Activated T-helper 1 cell treated with anti-CD3 and anti-CD28 coated beads, Interleukin-12 subunit alpha, Interleukin-12 subunit beta, Interleukin-2, Interleukin-4 antibody, amounts not matched to agents 30 ng/mL and 10 ng/mL and 1 ng/mL, durations not matched to agents 14 hours and 24 hours and 36 hours (primary cell): ENCODE measurements at regions of chr19 and their contacts with region 1.

Region 1: DNA sequence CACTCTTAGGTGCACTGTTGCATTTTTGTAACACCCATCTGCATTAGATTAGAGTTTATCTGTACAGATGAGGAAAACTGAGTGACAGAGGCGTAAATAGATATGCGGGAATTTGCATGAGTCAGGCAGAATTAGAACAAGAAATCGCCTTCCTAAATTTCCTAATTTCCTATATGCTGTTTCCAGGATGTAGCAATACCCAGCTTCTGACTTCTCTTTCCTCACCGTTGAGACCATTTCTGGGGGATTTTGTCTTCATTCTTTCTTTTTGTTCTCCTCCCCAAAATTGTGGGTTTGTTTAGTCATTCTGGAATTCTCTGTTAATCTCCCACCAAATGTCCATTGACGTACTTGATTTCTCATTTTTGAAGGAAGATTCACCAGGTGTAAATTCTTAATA is 10.6 kb upstream of the ZNF792 start:
- DNase-seq: no peak
- H3K4me3 Mint-ChIP-seq: no peak overlapping the region
- H3K27ac Mint-ChIP-seq: no peak overlapping the region
- H3K4me1 Mint-ChIP-seq: peaks cover 13% of the 10 kb centered on the region
- H3K27me3 Mint-ChIP-seq: peaks cover 4% of the 10 kb centered on the region

Region 2: GRCh38 chr19:34639491-34640085 is 335.1 kb before region 1 on chr19:
- intact Hi-C with region 1: loop called (anchors 1 kb)
- DNase-seq: peak; percentile 45
- H3K4me3 Mint-ChIP-seq: no peak overlapping the region
- H3K27ac Mint-ChIP-seq: no peak overlapping the region
- H3K4me1 Mint-ChIP-seq: no peaks in the 10 kb centered on the region
- H3K27me3 Mint-ChIP-seq: peaks cover 3% of the 10 kb centered on the region

Region 3: GRCh38 chr19:34953092-34953491 is 21.6 kb before region 1 on chr19:
- intact Hi-C with region 1: no loop called
- DNase-seq: no peak
- H3K4me3 Mint-ChIP-seq: no peak overlapping the region
- H3K27ac Mint-ChIP-seq: no peak overlapping the region
- H3K4me1 Mint-ChIP-seq: no peaks in the 10 kb centered on the region
- H3K27me3 Mint-ChIP-seq: no peaks in the 10 kb centered on the region

Region 4: GRCh38 chr19:34999498-35000341 is 25.1 kb after region 1 on chr19 and contains the start of gene GRAMD1A:
- intact Hi-C with region 1: loop called (anchors 1 kb)
- DNase-seq: peak; percentile 71
- H3K4me3 Mint-ChIP-seq: peak within 1 kb of the TSS; percentile 98
- H3K27ac Mint-ChIP-seq: peak within 1 kb of the TSS; percentile 96
- H3K4me1 Mint-ChIP-seq: peaks cover 59% of the 10 kb centered on the region
- H3K27me3 Mint-ChIP-seq: no peaks in the 10 kb centered on the region
- total RNA-seq, gene GRAMD1A: 176 and 189 TPM in 2 replicates

Region 5: GRCh38 chr19:35030257-35031071 is 55.8 kb after region 1 on chr19 and contains the start of gene SCN1B:
- intact Hi-C with region 1: loop called (anchors 1 kb)
- DNase-seq: peak; percentile 39
- H3K4me3 Mint-ChIP-seq: peak within 1 kb of the TSS; percentile 79
- H3K27ac Mint-ChIP-seq: peak within 1 kb of the TSS; percentile 37
- H3K4me1 Mint-ChIP-seq: peaks cover 7% of the 10 kb centered on the region
- H3K27me3 Mint-ChIP-seq: peaks cover 23% of the 10 kb centered on the region
- total RNA-seq, gene SCN1B: 1.1 and 1.2 TPM in 2 replicates

Region 6: GRCh38 chr19:35051796-35052195 is 77.2 kb after region 1 on chr19:
- intact Hi-C with region 1: no loop called
- DNase-seq: no peak
- H3K4me3 Mint-ChIP-seq: no peak overlapping the region
- H3K27ac Mint-ChIP-seq: no peak overlapping the region
- H3K4me1 Mint-ChIP-seq: no peaks in the 10 kb centered on the region
- H3K27me3 Mint-ChIP-seq: peaks cover 4% of the 10 kb centered on the region

Region 7: DNA sequence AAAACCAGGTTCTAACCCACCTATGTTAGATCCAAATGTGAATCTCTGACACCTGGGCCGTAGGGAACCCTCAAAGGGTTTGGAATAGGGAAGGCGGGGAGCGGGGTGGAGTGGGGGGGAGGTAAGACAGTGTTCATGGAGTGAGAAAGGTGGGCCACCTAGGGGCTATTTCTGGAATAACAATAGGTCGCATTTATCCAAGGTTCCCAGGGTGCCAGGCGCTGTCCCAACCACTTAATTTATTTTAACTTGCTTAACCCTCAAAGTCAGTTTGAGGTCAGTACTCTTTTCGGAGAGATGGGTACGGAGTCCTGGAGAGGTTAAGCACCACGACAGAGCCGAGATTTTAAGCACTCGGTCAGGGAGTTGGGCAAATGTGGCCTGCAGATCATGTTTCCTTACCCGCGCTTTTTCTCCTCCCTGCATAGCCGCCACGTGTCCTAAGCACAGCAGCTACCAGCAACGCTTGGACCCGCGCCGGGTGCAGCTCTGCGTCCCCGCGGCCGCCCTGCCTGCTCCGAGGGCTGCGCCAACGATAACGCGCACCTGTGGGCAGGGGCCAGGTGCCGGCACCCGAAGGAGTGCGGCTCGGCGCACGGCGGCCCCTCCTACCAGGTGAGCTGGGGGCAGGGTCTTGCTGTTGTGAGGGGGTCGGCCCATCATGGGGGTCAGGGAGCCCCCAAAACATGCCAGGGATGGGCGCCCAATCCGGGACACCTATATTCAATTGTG is 116.0 kb after region 1 on chr19:
- intact Hi-C with region 1: loop called (anchors 1 kb)
- DNase-seq: no peak
- H3K4me3 Mint-ChIP-seq: no peak overlapping the region
- H3K27ac Mint-ChIP-seq: no peak overlapping the region
- H3K4me1 Mint-ChIP-seq: no peaks in the 10 kb centered on the region
- H3K27me3 Mint-ChIP-seq: peaks cover 3% of the 10 kb centered on the region

Region 8: DNA sequence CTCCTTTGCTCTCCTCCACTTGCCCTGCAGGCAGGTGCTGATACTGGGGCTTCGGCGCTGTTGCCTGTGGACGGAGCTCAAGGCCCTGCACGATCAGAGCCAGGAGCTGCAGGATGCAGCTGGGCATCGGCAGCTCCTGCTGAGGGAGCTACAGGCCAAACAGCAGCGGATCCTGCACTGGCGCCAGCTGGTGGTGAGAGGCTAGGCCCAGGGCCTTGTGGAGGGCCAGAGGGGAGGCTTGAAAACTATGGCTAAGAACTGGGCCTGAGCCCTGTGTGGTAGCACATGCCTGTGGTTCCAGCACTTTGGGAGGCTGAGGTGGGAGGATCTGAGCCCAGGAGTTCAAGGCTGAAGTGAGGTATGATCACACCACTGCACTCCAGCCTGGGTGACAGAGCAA is 644.2 kb after region 1 on chr19:
- intact Hi-C with region 1: no loop called
- DNase-seq: no peak
- H3K4me3 Mint-ChIP-seq: no peak overlapping the region
- H3K27ac Mint-ChIP-seq: no peak overlapping the region
- H3K4me1 Mint-ChIP-seq: peaks cover 2% of the 10 kb centered on the region
- H3K27me3 Mint-ChIP-seq: no peaks in the 10 kb centered on the region